ENCODE measurements at regions of chr10 and their contacts with region 1.

Region 1: GRCh38 chr10:70418229-70418628 is 14.3 kb downstream of the EIF4EBP2 start:
- DNase-seq: no peak
- ATAC-seq: no peak
- H3K4me3 ChIP-seq: no peak overlapping the region
- H3K4me3 Mint-ChIP-seq: no peak overlapping the region
- H3K27ac ChIP-seq: no peak overlapping the region
- H3K27ac Mint-ChIP-seq: peak overlapping the region; percentile 41 to 59
- H3K4me1 ChIP-seq: no peaks in the 10 kb centered on the region
- H3K4me1 Mint-ChIP-seq: peaks cover 21 to 38% (median 35%) of the 10 kb centered on the region in 3 donors
- H3K27me3 ChIP-seq: no peaks in the 10 kb centered on the region
- H3K27me3 Mint-ChIP-seq: no peaks in the 10 kb centered on the region

Region 2: GRCh38 chr10:70312972-70313371 is 105.3 kb before region 1 on chr10:
- CTCF ChIA-PET with region 1: no interaction called
- POLR2A ChIA-PET with region 1: no interaction called
- DNase-seq: no peak
- ATAC-seq: no peak
- H3K4me3 ChIP-seq: no peak overlapping the region
- H3K4me3 Mint-ChIP-seq: no peak overlapping the region
- H3K27ac ChIP-seq: no peak overlapping the region
- H3K27ac Mint-ChIP-seq: no peak overlapping the region
- H3K4me1 ChIP-seq: no peaks in the 10 kb centered on the region
- H3K4me1 Mint-ChIP-seq: no peaks in the 10 kb centered on the region
- H3K27me3 ChIP-seq: no peaks in the 10 kb centered on the region
- H3K27me3 Mint-ChIP-seq: no peaks in the 10 kb centered on the region

Region 3: DNA sequence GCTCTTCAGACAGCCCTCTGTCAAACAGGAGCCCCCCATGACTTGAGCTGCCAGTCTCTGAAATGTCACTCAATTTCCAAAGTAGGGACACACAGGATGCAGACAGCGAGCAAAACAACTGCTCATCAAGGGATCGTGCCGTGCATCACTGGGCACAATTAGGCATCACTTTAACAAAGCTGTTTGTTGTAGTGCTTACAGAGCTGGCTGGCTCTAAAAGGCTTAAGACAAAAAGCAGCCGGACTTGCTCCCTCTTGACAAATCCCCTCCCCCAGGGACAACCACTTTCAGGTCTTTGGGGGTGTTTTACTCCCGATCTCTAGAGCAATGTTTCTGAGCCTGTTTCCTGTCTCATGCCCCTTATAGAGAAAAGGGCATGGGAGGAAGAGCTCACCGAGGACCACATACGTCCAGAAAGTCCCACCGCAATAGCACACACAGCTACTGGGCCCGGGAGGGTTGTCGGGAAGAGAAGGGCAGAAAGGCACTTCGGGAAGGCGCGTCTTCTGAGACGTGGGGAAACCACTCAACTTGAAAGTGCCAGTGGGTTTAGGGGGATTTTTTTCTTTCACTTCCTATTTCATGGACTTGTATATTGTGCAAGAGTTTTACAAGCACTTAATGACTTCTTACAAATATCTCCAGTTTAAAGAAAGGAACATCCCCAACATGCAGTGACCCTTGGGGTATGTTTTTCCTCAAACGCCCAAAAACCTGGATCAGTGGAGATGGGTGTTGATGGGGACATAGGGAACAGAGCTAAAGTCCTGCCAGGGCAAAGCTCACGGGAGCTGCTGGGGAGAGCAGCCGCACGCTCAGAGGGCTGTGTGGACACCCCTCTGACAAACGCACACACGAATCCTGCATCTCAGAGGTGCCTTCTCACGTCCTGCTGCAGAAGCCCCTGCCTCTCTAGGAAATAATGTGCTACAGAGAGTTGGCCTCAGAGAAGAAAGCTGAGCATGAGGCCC is 62.9 kb before region 1 on chr10:
- CTCF ChIA-PET with region 1: no interaction called
- POLR2A ChIA-PET with region 1: no interaction called
- DNase-seq: peak in 2 of 35 experiments; percentile 15 to 36
- ATAC-seq: no peak
- H3K4me3 ChIP-seq: no peak overlapping the region
- H3K4me3 Mint-ChIP-seq: peak overlapping the region; percentile 46 to 69 (median 48)
- H3K27ac ChIP-seq: no peak overlapping the region
- H3K27ac Mint-ChIP-seq: peak overlapping the region; percentile 23 to 36
- H3K4me1 ChIP-seq: peaks cover 2 to 19% of the 10 kb centered on the region in 2 experiments
- H3K4me1 Mint-ChIP-seq: peaks cover 7 to 14% (median 7%) of the 10 kb centered on the region in 3 donors
- H3K27me3 ChIP-seq: peaks cover 0 to 4% of the 10 kb centered on the region in 2 experiments
- H3K27me3 Mint-ChIP-seq: peaks cover 0 to 7% of the 10 kb centered on the region in 2 donors

Region 4: DNA sequence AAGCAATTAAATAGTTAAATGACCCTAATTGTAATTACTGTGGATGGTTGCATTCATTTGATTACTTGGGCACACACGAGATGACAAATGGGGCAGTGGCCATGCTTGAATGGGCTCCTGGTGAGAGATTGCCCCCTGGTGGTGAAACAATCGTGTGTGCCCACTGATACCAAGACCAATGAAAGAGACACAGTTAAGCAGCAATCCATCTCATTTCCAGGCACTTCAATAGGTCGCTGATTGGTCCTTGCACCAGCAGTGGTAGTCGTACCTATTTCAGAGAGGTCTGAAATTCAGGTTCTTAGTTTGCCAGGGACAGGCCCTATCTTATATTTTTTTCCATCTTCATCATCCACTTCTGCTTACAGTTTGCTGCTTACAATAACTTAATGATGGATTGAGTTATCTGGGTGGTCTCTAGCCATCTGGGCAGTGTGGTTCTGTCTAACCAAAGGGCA is 461.9 kb after region 1 on chr10:
- CTCF ChIA-PET with region 1: interaction called in 1 of 2 experiments, 11 read pairs
- POLR2A ChIA-PET with region 1: no interaction called
- DNase-seq: peak; percentile 31 to 87 (median 68)
- ATAC-seq: peak; percentile 68 to 94 (median 87)
- H3K4me3 ChIP-seq: no peak overlapping the region
- H3K4me3 Mint-ChIP-seq: no peak overlapping the region
- H3K27ac ChIP-seq: no peak overlapping the region
- H3K27ac Mint-ChIP-seq: no peak overlapping the region
- H3K4me1 ChIP-seq: no peaks in the 10 kb centered on the region
- H3K4me1 Mint-ChIP-seq: peaks cover 2 to 6% (median 4%) of the 10 kb centered on the region in 3 donors
- H3K27me3 ChIP-seq: no peaks in the 10 kb centered on the region
- H3K27me3 Mint-ChIP-seq: no peaks in the 10 kb centered on the region

Measured in T-cell (primary cell).